Astrocyte of the cerebellum (primary cell): ENCODE measurements at regions of chr16 and their contacts with region 1.

Region 1: DNA sequence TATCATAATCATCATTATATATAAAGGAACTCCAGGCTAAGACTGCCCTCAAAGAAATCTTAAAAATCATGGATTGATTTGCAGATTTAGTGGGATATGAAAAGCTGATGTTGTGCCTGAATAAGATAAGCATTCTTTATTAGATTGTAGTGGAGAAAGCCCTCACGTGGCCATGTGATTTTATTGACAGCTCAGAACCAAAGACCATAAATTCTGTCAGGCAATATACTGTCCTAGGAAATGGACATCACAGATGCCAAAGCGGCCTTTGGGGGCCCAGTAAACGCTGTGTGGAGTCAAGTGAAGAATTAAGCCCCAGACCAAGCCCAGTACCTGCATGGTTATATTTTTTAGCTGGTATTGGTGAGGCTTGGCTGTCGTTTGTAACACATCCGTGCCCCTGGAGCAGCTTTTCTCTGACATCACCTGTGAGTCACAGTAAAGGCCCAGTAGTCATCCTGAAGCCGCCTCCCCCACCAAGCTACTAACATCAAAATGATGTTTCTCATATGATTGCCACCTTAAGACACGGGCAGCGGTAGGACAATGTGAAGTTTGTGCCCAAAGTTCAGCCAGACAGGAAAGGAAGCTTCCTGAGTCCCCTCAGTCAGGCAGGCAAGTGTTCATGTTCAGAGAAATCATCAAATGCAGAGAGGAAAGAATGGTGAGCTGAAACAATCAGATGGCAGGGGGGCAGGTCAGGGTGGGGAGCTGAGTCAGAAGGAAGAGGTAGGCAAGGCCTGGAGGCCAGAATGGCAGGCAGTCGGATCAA is 209.4 kb downstream of the IRX3 start:
- DNase-seq: peak; percentile 33
- H3K4me3 ChIP-seq: no peak overlapping the region
- CTCF ChIP-seq: no peak

Region 2: DNA sequence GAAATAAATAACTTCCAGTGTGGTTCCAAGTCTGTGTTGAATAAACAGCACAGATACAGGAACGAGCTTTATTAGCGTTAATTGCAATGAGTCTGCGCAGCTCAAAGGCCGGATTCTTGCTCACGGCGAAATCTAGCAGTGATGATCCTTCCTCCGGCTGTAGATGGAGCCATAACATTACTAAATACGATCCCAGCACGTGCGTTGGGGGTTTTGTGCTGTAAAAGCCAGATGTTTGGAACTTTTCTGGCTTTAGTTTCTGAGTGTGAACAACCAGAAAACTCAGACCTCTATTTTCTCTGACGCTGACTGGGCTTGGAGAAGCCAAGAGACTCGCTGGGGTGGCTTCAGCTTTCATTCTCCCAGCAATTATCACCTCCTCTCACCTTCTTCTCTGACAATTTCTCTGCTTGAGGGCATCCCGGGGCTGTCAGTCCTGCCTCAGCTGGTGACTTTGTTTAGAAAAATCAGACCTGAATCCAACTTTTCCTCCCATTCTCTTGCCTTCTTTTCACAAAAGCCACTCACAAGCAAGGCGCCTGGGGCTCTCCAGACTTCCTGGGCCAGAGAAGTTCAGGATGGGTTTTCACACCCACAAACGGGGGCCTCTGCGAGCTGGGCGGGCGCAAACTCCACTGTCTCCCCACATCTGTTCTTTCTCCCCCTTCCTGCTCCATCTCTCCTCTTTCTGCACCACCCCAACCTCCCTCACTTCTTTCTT is 527.1 kb before region 1 on chr16:
- in situ Hi-C with region 1: loop called (anchors 5 kb)
- DNase-seq: peak; percentile 77
- H3K4me3 ChIP-seq: no peak overlapping the region
- CTCF ChIP-seq: peak; percentile 73

Region 3: GRCh38 chr16:53945996-53946395 is 131.2 kb before region 1 on chr16:
- in situ Hi-C with region 1: loop called (anchors 5 kb)
- DNase-seq: peak; percentile 55
- H3K4me3 ChIP-seq: no peak overlapping the region
- CTCF ChIP-seq: peak; percentile 79

Region 4: GRCh38 chr16:54009464-54010176 is 67.6 kb before region 1 on chr16:
- in situ Hi-C with region 1: loop called (anchors 5 kb)
- DNase-seq: no peak
- H3K4me3 ChIP-seq: no peak overlapping the region
- CTCF ChIP-seq: no peak

Region 5: DNA sequence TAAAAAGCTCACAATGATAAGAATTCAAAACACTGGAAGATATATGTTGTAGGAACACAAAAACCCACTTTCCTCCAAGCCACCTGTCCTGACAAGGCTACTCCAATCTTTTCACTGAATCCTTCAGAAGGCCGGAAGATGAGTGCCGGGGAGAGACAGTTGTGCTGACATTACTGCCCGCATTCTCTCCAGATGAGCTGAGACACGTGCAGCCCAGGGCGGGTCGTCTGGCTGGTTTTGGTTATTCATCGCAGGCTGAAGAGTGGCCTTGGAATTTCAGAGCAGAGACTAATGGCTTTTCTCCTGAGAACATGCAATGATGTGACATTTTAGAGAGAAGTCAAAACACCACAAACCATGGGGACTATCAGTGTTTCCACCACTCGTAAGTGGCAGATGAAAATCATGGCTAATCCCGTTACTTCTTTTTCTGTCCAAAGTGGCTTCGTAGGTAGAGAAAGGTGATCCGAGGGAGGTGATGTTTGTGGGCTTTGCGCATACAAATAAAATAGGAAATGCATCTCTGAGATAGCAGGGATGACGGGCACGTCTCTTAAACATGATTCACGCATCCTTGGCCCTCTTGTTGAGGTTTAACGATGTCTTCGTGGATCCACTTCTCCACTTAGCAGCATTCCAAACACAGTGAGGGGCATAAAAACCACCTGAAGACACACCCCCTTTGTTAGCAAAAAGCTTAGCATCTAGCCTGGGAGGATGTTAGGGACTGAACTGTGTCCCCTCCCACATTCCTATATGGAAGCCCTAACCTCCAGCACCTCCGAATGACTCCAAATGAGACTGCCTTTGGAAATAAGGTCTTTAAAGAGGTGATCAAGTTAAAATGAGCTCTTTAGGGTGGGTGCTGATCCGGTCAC is 75.4 kb after region 1 on chr16:
- in situ Hi-C with region 1: loop called (anchors 5 kb)
- DNase-seq: no peak
- H3K4me3 ChIP-seq: no peak overlapping the region
- CTCF ChIP-seq: no peak

Region 6: DNA sequence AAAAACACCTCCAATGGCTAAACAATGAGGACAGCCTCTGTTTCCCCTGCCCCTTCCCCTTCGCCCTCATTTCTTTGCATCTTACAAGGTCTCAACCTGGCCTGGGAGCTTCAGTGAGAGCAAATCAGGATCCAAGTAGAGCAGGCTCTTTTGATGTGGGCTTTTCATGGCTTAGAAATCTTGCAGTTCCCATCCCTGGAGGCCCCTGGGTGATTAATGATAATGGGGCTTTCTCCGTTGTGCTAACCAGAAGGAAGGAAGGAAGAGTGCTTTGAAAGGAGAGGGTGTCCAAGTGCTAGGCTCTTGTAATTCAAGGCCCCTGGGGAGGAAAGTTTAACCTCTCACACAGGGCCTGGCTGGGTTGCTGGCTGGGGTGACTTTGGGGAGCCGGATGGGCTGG is 227.8 kb after region 1 on chr16:
- in situ Hi-C with region 1: no loop called
- DNase-seq: no peak
- H3K4me3 ChIP-seq: no peak overlapping the region
- CTCF ChIP-seq: no peak